WTC11 (cell line): ENCODE measurements at regions of chr6 and their contacts with region 1.

Region 1: DNA sequence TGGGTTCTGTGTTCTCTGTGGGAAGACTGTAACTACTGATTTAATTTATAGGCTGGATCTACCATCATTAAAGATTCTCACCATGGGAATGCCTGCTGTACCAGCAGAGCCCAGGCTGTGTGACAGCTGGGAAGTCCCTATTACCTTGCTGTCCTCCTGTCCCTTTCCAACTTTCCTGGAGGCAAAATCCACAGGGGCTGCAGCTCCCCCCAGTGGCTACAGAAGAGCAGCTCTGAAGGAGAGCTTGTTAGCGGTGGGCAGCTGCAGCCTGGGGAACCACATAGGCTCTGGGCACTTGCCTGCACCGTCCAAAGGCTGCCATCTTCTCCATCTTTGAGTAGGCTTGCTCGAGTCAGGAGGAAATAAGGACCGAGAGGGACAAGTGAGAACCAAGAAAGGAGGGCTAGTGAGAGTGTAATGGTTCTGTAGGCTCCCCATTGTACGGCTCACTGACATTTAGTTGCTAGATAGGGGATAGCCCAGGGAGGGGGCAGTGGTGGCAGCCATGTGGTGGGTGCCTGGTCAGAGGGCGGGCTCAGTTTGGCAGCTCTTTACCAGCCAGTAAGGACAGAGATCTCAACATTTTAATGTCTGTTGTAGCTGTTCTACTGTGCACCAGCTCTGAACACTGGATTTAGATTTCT is 155.1 kb upstream of the MLIP start:
- DNase-seq: peak; percentile 80
- ATAC-seq: peak; percentile 100
- H3K4me3 Mint-ChIP-seq: no peak overlapping the region
- H3K27ac Mint-ChIP-seq: no peak overlapping the region
- H3K4me1 Mint-ChIP-seq: no peaks in the 10 kb centered on the region
- H3K27me3 Mint-ChIP-seq: no peaks in the 10 kb centered on the region
- CTCF ChIP-seq: no peak

Region 2: DNA sequence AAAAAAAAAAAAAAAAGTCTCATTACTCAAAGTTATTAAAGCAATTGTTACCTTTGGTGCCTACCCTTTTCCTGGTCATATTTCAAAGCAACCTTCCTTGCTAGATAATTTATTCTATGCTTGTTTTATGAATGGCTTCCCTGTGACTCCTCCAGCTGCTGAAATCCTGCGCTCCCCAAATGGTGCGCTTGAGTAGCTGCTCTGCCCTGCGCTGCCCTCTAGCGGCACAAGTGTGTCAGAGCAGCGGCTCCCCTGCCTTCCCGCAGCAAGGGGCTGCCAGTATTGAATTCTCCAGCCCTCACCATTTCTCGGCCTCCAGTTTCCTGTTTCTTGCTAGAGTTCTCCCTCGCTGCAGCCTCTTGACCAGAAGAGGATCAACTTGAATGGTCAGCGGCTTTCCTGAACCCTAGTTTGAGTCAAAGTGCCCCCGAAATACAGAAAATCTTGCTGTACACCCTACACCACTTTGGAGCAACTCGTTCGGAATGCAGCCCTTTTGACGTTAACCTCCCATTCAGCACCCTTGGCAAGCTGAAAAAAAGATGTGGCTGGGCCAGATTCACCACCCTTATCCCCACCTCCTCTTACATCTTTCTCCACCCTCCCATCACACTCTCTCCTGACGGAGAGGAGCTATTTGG is 230.3 kb before region 1 on chr6:
- CTCF ChIA-PET with region 1: interaction called, 107 read pairs
- POLR2A ChIA-PET with region 1: no interaction called
- DNase-seq: peak; percentile 86
- ATAC-seq: peak; percentile 72
- H3K4me3 Mint-ChIP-seq: no peak overlapping the region
- H3K27ac Mint-ChIP-seq: no peak overlapping the region
- H3K4me1 Mint-ChIP-seq: peaks cover 43% of the 10 kb centered on the region
- H3K27me3 Mint-ChIP-seq: no peaks in the 10 kb centered on the region
- CTCF ChIP-seq: peak; percentile 87

Region 3: GRCh38 chr6:53734473-53735299 is 221.5 kb before region 1 on chr6:
- CTCF ChIA-PET with region 1: interaction called, 107 read pairs
- POLR2A ChIA-PET with region 1: no interaction called
- DNase-seq: peak; percentile 72
- ATAC-seq: peak; percentile 99
- H3K4me3 Mint-ChIP-seq: no peak overlapping the region
- H3K27ac Mint-ChIP-seq: no peak overlapping the region
- H3K4me1 Mint-ChIP-seq: peaks cover 35% of the 10 kb centered on the region
- H3K27me3 Mint-ChIP-seq: no peaks in the 10 kb centered on the region
- CTCF ChIP-seq: peak; percentile 33; the same call in 1 of the 2 replicates

Region 4: DNA sequence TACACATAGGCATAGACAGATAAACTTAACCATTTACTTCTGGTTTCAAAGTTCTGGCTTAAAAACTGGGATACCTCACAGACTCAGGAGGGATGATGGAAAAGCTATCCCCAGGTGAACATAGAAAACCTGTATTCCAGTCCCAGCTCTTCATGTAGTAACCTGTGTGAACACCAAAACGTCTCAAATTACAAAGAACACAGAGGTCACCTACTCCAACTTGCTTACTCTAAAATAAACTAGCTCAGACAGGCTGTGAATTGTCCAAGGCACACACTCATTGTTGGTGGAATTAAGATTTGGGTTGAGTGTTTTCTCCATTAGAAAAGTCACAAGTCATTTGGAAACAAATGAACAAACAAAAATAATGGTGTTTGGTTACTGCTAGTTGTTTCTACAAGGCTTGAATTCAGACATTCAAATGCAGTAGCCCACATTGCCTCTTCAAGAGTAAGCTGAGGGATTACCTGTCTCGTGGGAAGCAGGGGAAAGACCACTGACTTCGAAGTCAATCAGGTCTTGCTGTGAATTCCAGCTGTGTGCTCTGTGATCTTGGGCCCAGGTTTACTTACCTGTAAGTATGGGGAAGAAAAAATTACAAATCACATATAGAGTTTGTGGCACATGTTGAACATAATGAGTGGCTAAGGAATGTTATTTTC is 209.6 kb before region 1 on chr6:
- CTCF ChIA-PET with region 1: interaction called, 11 read pairs
- POLR2A ChIA-PET with region 1: no interaction called
- DNase-seq: no peak
- ATAC-seq: peak; percentile 65
- H3K4me3 Mint-ChIP-seq: no peak overlapping the region
- H3K27ac Mint-ChIP-seq: peak overlapping the region; percentile 83
- H3K4me1 Mint-ChIP-seq: peaks cover 17% of the 10 kb centered on the region
- H3K27me3 Mint-ChIP-seq: no peaks in the 10 kb centered on the region
- CTCF ChIP-seq: no peak

Region 5: GRCh38 chr6:53771785-53772624 is 184.2 kb before region 1 on chr6:
- CTCF ChIA-PET with region 1: interaction called, 11 read pairs
- POLR2A ChIA-PET with region 1: no interaction called
- DNase-seq: no peak
- ATAC-seq: no peak
- H3K4me3 Mint-ChIP-seq: no peak overlapping the region
- H3K27ac Mint-ChIP-seq: no peak overlapping the region
- H3K4me1 Mint-ChIP-seq: peaks cover 16% of the 10 kb centered on the region
- H3K27me3 Mint-ChIP-seq: peaks cover 5% of the 10 kb centered on the region; the same call in 1 of the 2 replicates
- CTCF ChIP-seq: no peak

Region 6: GRCh38 chr6:53794720-53795253 is 161.4 kb before region 1 on chr6 and contains the start of gene LRRC1:
- CTCF ChIA-PET with region 1: interaction called, 51 read pairs
- POLR2A ChIA-PET with region 1: interaction called, 11 read pairs
- DNase-seq: peak; percentile 96
- ATAC-seq: peak; percentile 66
- H3K4me3 Mint-ChIP-seq: peak within 1 kb of the TSS; percentile 95
- H3K27ac Mint-ChIP-seq: peak within 1 kb of the TSS; percentile 98
- H3K4me1 Mint-ChIP-seq: peaks cover 30% of the 10 kb centered on the region
- H3K27me3 Mint-ChIP-seq: peaks cover 20% of the 10 kb centered on the region
- CTCF ChIP-seq: no peak
- total RNA-seq, gene LRRC1: 12.6 to 13.2 TPM (median 12.7 TPM) in 3 replicates

Region 7: DNA sequence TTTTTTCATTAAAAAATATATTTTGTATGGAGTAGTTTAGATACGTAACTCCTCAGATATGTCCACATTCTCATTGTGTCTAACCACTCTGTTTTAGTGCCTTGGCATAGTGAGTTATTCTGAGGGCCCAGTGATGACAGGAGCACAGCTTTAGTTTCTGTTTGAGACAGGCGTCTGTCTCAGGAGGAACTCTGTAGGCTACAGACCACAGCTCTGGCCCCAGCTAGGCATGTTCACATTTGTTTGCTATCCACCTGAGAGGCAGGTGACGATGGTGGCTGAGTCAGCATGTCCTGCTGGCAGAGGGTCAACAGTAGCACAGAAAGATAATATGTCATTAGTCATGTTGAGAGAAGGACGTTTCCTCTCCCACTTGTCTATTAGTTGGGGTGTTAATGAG is 145.1 kb before region 1 on chr6:
- CTCF ChIA-PET with region 1: interaction called, 11 read pairs
- POLR2A ChIA-PET with region 1: interaction called, 3 read pairs
- DNase-seq: no peak
- ATAC-seq: peak; percentile 50
- H3K4me3 Mint-ChIP-seq: no peak overlapping the region
- H3K27ac Mint-ChIP-seq: peak overlapping the region; percentile 81
- H3K4me1 Mint-ChIP-seq: peaks cover 69% of the 10 kb centered on the region
- H3K27me3 Mint-ChIP-seq: no peaks in the 10 kb centered on the region
- CTCF ChIP-seq: no peak